ENCODE measurements at regions of chr17 and their contacts with region 1.

Region 1: DNA sequence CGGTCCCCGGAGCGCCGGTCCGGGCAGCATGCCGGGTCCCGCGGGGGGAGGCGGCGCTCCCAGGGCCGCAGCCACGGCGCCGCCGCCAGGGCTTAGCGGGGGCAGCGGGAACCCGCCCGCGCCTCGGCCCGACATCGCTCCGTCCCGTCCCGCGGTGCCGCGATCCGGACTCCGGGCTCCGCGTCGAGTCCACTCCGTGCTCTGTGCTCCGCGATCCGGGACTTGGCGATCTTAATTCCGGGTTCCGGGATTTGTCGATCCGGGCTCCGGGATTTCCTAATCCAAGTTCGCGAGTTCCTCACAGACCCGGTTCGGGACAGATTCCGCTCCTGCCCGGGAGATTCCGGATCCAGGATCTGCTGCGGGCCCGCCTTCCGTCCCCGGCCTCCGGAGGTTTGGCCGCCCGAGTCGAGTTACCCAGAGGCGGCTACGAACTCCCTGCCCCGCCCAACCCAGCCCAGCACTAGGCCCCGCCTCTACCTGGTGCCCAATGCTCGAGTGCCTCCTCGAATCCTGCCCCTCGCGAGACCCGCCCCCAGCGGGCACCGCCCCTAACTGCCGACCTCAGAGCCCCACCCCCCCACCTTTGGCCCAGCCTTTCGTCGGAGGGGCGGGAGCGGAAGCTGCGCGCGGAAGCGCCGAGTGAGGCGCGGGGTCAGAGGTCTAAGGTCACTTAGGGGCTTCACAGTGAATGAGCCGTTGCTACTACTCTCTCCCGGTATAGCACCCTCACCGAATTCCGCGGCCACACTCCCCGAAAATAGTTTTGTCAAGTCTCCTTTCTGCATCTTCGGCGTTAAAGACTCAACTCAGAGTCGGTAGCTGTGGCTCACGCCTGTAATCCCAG is at the start of gene SMARCD2:
- DNase-seq: peak; percentile 96
- ATAC-seq: peak; percentile 90
- H3K4me3 Mint-ChIP-seq: peak within 1 kb of the TSS; percentile 94
- H3K27ac Mint-ChIP-seq: peak within 1 kb of the TSS; percentile 95
- H3K4me1 Mint-ChIP-seq: peaks cover 49% of the 10 kb centered on the region
- H3K27me3 Mint-ChIP-seq: no peaks in the 10 kb centered on the region
- CTCF ChIP-seq: no peak
- total RNA-seq, gene SMARCD2: 114 and 117 TPM in 2 replicates

Region 2: GRCh38 chr17:63741221-63742049 is 101.3 kb before region 1 on chr17 and contains the start of gene STRADA:
- CTCF ChIA-PET with region 1: no interaction called
- POLR2A ChIA-PET with region 1: interaction called, 19 read pairs
- intact Hi-C with region 1: loop called (anchors 1 kb)
- DNase-seq: peak; percentile 99
- ATAC-seq: peak; percentile 86
- H3K4me3 Mint-ChIP-seq: peak within 1 kb of the TSS; percentile 86
- H3K27ac Mint-ChIP-seq: peak within 1 kb of the TSS; percentile 96
- H3K4me1 Mint-ChIP-seq: peaks cover 28% of the 10 kb centered on the region
- H3K27me3 Mint-ChIP-seq: no peaks in the 10 kb centered on the region
- CTCF ChIP-seq: no peak
- total RNA-seq, gene STRADA: 72.5 and 80.2 TPM in 2 replicates

Region 3: DNA sequence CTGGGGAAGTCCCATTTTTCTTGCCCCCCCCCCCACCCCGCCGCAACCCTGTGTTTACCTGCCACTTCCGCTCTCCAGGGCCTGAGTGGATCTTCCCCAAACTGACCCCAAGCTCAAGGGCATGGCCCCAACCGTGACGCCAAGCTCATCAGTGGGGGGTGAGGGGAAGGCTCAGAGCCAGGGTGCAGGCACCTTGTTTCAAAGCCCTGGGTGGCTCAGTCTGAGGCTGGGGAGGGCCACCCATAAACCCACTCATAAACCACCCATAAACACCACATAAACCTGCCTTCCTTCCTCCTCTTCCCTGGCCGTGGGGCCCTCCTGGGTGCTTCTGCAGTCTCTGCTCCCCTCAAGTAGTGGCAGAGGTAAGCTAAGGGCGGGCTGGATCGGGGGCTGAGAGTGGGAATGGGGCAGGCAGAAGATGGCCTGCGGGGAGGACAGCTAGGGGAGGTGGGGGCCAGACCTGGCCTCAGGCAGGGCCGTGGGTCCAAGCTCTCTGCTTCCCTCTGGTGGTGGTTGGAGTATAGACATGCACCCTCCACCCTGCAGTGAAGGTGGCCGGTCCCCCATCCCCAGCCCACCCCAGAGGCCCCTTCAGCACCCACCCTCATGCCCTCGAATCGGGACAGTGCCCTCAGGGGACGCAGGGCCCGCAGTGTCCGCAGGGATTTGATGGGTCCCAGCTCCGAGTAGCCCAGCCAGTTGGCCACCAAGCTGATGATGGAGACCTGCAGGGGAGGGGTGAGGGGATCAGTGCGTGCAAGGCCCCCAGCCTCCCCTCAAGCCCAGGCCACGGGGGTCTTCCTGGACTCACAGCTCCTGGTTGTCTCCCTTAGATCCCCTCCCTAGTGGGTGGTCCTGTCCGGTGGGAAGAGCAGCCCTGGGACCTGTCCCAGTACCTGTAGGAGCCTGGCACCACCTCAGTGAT is 103.9 kb after region 1 on chr17:
- CTCF ChIA-PET with region 1: no interaction called
- POLR2A ChIA-PET with region 1: interaction called, 10 read pairs
- intact Hi-C with region 1: no loop called
- DNase-seq: peak; percentile 67
- ATAC-seq: peak; percentile 72
- H3K4me3 Mint-ChIP-seq: peak overlapping the region; percentile 74
- H3K27ac Mint-ChIP-seq: peak overlapping the region; percentile 91
- H3K4me1 Mint-ChIP-seq: peaks cover 47% of the 10 kb centered on the region
- H3K27me3 Mint-ChIP-seq: no peaks in the 10 kb centered on the region
- CTCF ChIP-seq: no peak

Region 4: GRCh38 chr17:64399071-64399766 is 556.5 kb after region 1 on chr17:
- CTCF ChIA-PET with region 1: no interaction called
- POLR2A ChIA-PET with region 1: interaction called, 10 read pairs
- intact Hi-C with region 1: loop called (anchors 10 kb)
- DNase-seq: no peak
- ATAC-seq: no peak
- H3K4me3 Mint-ChIP-seq: no peak overlapping the region
- H3K27ac Mint-ChIP-seq: no peak overlapping the region
- H3K4me1 Mint-ChIP-seq: peaks cover 75% of the 10 kb centered on the region
- H3K27me3 Mint-ChIP-seq: no peaks in the 10 kb centered on the region
- CTCF ChIP-seq: no peak

Region 5: DNA sequence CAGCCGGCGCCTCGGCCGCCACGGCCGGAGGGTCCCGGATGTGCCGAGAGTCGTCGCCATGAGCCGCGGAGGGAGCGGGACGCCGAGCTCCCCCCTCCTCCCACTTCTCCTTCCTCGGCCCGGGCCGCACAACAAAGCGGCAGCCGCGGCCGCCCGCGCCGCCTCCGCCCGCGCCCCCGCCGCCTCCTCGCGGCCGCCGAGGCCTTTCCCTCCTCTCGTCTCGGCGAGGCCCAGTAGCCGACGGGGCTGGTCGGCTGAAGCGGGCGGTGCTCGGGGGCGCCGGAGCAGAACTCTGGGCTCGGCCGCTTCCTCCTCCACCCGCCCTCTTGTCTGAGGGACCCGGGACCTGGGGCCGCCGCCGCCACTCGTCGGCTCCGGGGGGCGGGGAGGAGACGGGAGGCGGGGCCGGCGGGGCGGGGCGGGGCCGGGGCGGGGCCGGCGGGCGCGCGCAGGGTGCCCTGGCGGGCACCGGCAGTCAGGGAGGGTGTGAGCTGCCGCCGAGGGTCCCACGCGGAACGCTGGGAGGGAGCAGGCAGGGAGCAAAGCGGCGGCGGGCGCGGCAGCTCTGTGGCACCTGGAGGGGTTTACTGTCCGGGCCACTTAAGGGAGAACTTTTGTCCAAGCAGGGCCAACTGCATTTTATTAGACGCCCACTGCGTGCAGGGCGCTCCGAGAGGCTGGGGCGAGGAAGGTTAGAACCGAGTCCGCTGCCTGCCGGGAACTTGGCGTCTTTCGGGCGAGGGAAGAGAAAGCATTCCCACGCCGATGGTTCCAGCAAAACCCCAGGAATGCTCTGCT is 819.4 kb after region 1 on chr17 and contains the start of gene SMURF2:
- CTCF ChIA-PET with region 1: no interaction called
- POLR2A ChIA-PET with region 1: no interaction called
- intact Hi-C with region 1: loop called (anchors 2 kb)
- DNase-seq: peak; percentile 83
- ATAC-seq: peak; percentile 85
- H3K4me3 Mint-ChIP-seq: peak within 1 kb of the TSS; percentile 96
- H3K27ac Mint-ChIP-seq: peak within 1 kb of the TSS; percentile 95
- H3K4me1 Mint-ChIP-seq: peaks cover 28% of the 10 kb centered on the region
- H3K27me3 Mint-ChIP-seq: no peaks in the 10 kb centered on the region
- CTCF ChIP-seq: no peak
- total RNA-seq, gene SMURF2: 18.9 and 23.0 TPM in 2 replicates